Activated B cell treated with CpG ODN at 0.5 μM for 24 hours (primary cell): ENCODE measurements at regions of chr5 and their contacts with region 1.

Region 1: DNA sequence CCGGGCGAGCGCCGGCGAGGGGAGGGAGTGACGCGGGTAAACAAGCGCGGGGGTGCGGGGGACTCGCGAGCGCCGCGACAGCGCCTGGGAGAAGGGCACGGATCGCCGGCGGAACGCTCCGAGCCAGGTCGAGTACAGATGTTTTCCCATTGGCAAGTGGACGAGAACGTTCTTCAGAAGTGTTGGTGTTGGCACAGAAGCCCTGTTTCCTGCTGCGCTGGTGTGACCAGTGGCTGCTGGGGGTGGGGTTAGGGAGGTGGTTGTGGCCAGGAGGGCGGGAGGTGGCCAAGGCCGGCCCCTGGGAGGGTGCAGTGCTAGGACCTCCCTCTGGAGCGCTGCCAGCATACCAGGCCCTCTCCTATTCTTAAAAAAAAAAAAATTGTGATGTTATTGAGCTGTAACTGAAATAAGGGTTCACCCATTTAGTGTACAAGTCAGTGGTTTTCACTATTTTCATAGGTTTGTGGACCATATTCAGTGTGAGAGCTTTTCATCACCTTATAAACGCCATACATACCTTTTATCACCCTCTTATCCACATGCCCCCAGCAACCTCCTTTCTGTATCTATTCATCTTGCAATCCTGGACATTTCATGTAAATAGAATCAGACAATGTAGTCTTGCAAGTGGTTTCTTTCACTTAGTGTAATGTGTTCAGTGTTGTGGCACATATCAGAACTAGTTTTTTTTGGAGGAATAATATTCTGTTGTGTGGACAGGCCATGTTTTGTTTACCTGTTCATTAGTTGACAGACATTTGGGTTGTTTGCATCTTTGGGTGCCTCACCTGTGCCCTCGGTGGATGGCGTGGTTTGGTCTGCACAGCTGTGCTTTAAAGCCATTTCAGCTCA is 1.1 kb downstream of the SQSTM1 start:
- DNase-seq: peak; percentile 75
- ATAC-seq: peak; percentile 52
- H3K4me3 Mint-ChIP-seq: peak overlapping the region; percentile 96
- H3K27ac Mint-ChIP-seq: peak overlapping the region; percentile 92
- H3K4me1 Mint-ChIP-seq: peaks cover 62% of the 10 kb centered on the region
- H3K27me3 Mint-ChIP-seq: no peaks in the 10 kb centered on the region
- CTCF ChIP-seq: no peak

Region 2: DNA sequence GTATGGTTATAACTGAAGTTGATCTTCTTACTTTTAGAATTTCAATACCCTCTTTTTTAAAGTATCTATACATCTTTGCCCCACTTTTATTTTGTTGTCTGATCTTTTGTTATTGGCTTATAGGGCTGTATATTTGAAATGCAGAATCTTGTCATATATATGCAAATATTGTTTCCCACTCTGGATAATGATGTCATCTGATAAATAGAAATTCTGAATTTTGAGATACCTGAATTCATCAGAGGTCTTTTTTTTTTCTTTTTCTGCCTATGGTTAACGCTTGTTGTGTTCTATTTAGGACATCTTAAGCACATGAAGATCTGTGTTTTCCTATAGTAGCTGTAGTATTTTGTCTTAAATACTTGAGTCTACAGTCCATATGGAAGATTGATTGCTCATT is 863.0 kb before region 1 on chr5:
- CTCF ChIA-PET with region 1: no interaction called
- POLR2A ChIA-PET with region 1: no interaction called
- intact Hi-C with region 1: no loop called
- DNase-seq: no peak
- ATAC-seq: no peak
- H3K4me3 Mint-ChIP-seq: no peak overlapping the region
- H3K27ac Mint-ChIP-seq: no peak overlapping the region
- H3K4me1 Mint-ChIP-seq: no peaks in the 10 kb centered on the region
- H3K27me3 Mint-ChIP-seq: no peaks in the 10 kb centered on the region
- CTCF ChIP-seq: no peak

Region 3: GRCh38 chr5:179697993-179698934 is 123.5 kb before region 1 on chr5:
- CTCF ChIA-PET with region 1: no interaction called
- POLR2A ChIA-PET with region 1: interaction called, 5 read pairs
- intact Hi-C with region 1: loop called (anchors 1 kb)
- DNase-seq: peak; percentile 96
- ATAC-seq: peak; percentile 89
- H3K4me3 Mint-ChIP-seq: peak overlapping the region; percentile 97
- H3K27ac Mint-ChIP-seq: peak overlapping the region; percentile 99
- H3K4me1 Mint-ChIP-seq: peaks cover 41% of the 10 kb centered on the region
- H3K27me3 Mint-ChIP-seq: no peaks in the 10 kb centered on the region
- CTCF ChIP-seq: no peak

Region 4: DNA sequence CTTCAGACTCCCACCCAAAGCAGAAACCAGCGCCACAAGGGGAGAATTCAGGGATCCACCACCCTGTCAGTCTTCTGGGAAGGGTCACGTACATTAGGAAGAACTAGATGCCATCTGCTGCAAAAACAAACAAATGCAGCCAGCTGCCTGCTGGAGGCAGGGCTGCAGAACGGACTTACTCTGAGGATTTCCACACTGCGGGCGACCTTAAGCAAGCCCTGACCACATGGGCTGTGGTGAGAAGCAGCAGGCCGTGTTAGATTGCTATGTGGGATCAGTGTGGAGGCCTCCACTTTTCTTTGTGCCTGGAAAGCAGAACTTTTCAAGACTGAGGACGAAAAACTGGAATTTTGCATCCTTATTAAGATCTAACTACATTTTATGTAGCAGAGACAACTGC is 41.4 kb before region 1 on chr5:
- CTCF ChIA-PET with region 1: no interaction called
- POLR2A ChIA-PET with region 1: no interaction called
- intact Hi-C with region 1: no loop called
- DNase-seq: no peak
- ATAC-seq: no peak
- H3K4me3 Mint-ChIP-seq: no peak overlapping the region
- H3K27ac Mint-ChIP-seq: no peak overlapping the region
- H3K4me1 Mint-ChIP-seq: no peaks in the 10 kb centered on the region
- H3K27me3 Mint-ChIP-seq: no peaks in the 10 kb centered on the region
- CTCF ChIP-seq: no peak

Region 5: DNA sequence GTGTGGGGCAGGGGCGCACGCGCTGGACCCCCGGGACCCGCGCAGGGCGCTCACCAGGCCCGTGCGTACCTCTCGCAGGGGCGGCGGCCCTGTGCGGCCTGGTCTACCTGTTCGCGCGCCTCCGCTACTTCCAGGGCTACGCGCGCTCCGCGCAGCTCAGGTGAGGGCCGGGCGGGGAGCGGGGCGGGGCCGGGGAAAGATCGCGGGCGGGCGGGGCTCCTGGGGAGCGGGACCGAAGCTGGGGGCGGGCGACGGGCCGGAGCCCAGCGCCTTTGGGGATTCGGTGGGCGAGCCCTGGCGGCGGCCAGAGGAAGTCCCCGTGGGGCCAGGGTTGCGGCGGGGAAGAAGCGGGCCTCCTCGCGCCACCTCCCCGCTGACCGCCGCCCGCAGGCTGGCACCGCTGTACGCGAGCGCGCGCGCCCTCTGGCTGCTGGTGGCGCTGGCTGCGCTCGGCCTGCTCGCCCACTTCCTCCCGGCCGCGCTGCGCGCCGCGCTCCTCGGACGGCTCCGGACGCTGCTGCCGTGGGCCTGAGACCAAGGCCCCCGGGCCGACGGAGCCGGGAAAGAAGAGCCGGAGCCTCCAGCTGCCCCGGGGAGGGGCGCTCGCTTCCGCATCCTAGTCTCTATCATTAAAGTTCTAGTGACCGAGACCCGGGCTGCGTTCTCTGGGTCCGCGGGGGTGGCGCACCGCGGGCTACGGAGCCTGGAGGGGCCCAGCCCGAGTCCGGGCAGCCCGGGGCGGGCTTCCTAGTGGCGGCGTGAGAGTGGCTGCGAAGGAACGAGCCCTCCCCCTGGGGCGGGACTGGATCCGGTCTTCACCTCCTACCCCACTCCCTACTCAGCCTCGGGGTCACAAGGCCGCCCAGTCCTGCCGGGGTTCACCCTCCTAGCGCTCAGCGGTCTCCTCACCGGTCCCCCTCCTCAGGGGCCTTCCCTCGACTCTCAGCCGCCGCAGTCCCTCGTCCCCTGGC is 25.7 kb before region 1 on chr5:
- CTCF ChIA-PET with region 1: interaction called, 3 read pairs
- POLR2A ChIA-PET with region 1: interaction called, 16 read pairs
- intact Hi-C with region 1: no loop called
- DNase-seq: peak; percentile 78
- ATAC-seq: peak; percentile 78
- H3K4me3 Mint-ChIP-seq: peak overlapping the region; percentile 64
- H3K27ac Mint-ChIP-seq: peak overlapping the region; percentile 7
- H3K4me1 Mint-ChIP-seq: peaks cover 29% of the 10 kb centered on the region
- H3K27me3 Mint-ChIP-seq: no peaks in the 10 kb centered on the region
- CTCF ChIP-seq: peak; percentile 32

Region 6: DNA sequence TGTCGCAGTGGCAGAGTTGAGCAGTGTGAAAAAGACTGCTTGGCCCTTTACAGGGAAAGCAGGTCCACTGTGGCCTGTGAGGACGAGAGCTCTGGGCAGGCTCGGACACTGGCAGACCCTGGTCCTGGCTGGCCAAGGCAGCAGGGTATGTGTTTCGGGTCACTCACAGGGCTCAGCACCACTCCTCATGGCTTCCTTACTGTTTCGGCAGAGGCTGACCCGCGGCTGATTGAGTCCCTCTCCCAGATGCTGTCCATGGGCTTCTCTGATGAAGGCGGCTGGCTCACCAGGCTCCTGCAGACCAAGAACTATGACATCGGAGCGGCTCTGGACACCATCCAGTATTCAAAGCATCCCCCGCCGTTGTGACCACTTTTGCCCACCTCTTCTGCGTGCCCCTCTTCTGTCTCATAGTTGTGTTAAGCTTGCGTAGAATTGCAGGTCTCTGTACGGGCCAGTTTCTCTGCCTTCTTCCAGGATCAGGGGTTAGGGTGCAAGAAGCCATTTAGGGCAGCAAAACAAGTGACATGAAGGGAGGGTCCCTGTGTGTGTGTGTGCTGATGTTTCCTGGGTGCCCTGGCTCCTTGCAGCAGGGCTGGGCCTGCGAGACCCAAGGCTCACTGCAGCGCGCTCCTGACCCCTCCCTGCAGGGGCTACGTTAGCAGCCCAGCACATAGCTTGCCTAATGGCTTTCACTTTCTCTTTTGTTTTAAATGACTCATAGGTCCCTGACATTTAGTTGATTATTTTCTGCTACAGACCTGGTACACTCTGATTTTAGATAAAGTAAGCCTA is 14.6 kb after region 1 on chr5:
- CTCF ChIA-PET with region 1: no interaction called
- POLR2A ChIA-PET with region 1: interaction called, 10 read pairs
- intact Hi-C with region 1: loop called (anchors 2 kb)
- DNase-seq: no peak
- ATAC-seq: peak; percentile 92
- H3K4me3 Mint-ChIP-seq: no peak overlapping the region
- H3K27ac Mint-ChIP-seq: peak overlapping the region; percentile 63
- H3K4me1 Mint-ChIP-seq: peaks cover 15% of the 10 kb centered on the region
- H3K27me3 Mint-ChIP-seq: no peaks in the 10 kb centered on the region
- CTCF ChIP-seq: no peak

Region 7: GRCh38 chr5:179858586-179859427 is 37.0 kb after region 1 on chr5 and contains the start of gene MRNIP:
- CTCF ChIA-PET with region 1: no interaction called
- POLR2A ChIA-PET with region 1: interaction called, 20 read pairs
- intact Hi-C with region 1: loop called (anchors 1 kb)
- DNase-seq: peak; percentile 92
- ATAC-seq: peak; percentile 94
- H3K4me3 Mint-ChIP-seq: peak within 1 kb of the TSS; percentile 96
- H3K27ac Mint-ChIP-seq: peak within 1 kb of the TSS; percentile 89
- H3K4me1 Mint-ChIP-seq: peaks cover 33% of the 10 kb centered on the region
- H3K27me3 Mint-ChIP-seq: no peaks in the 10 kb centered on the region
- CTCF ChIP-seq: no peak
- total RNA-seq, gene MRNIP: 54.6 and 70.0 TPM in 2 replicates

Region 8: GRCh38 chr5:179878222-179879009 is 56.6 kb after region 1 on chr5:
- CTCF ChIA-PET with region 1: no interaction called
- POLR2A ChIA-PET with region 1: no interaction called
- intact Hi-C with region 1: no loop called
- DNase-seq: no peak
- ATAC-seq: no peak
- H3K4me3 Mint-ChIP-seq: no peak overlapping the region
- H3K27ac Mint-ChIP-seq: no peak overlapping the region
- H3K4me1 Mint-ChIP-seq: no peaks in the 10 kb centered on the region
- H3K27me3 Mint-ChIP-seq: no peaks in the 10 kb centered on the region
- CTCF ChIP-seq: no peak

Region 9: DNA sequence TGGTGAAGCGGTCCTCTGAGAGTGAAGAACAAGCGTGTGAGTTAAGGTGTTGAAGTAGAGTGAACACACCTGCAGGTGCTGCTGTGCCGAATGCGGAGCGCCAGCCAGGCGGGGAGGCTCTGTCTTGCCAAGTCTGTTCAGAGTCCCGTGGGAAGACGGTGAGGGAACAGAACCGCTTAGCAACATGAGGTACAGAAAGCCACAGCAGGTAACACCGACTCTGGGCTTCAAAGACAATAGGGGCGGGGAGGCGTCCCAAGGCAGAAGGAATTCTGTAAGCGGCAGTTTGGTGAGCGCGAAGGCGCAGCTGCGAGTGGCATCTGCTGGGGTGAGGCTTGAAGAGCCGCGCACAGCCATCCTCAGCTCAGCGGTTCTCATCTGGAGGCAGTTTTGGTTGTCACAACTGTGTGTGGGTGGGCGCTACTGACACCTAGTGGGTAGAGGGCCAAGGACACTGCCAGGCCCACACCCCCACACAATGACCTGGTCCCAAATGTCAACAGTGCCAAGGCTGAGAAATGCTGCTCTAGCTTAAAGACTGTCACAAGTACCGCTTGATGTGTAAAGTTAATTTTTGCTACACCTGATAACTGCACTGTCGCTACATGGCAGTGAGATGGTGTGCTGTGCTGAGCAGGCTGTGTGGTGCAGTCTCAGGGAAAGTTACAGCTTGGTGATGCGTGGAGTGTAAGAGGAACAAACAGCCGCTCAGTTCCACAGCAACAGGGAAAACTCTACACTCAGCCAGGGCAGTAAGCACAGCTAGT is 153.3 kb after region 1 on chr5:
- CTCF ChIA-PET with region 1: interaction called, 3 read pairs
- POLR2A ChIA-PET with region 1: interaction called, 11 read pairs
- intact Hi-C with region 1: no loop called
- DNase-seq: peak; percentile 58
- ATAC-seq: peak; percentile 84
- H3K4me3 Mint-ChIP-seq: no peak overlapping the region
- H3K27ac Mint-ChIP-seq: peak overlapping the region; percentile 76
- H3K4me1 Mint-ChIP-seq: peaks cover 51% of the 10 kb centered on the region
- H3K27me3 Mint-ChIP-seq: no peaks in the 10 kb centered on the region
- CTCF ChIP-seq: no peak

Region 10: GRCh38 chr5:180172450-180173197 is 350.8 kb after region 1 on chr5:
- CTCF ChIA-PET with region 1: no interaction called
- POLR2A ChIA-PET with region 1: no interaction called
- intact Hi-C with region 1: no loop called
- DNase-seq: no peak
- ATAC-seq: no peak
- H3K4me3 Mint-ChIP-seq: no peak overlapping the region
- H3K27ac Mint-ChIP-seq: no peak overlapping the region
- H3K4me1 Mint-ChIP-seq: no peaks in the 10 kb centered on the region
- H3K27me3 Mint-ChIP-seq: peaks cover 6% of the 10 kb centered on the region
- CTCF ChIP-seq: no peak